Right cardiac atrium (tissue), 5 donors: ENCODE measurements at regions of chr12 and their contacts with region 1.

Region 1: GRCh38 chr12:71746983-71747611 is 7.6 kb upstream of the RAB21 start:
- DNase-seq: no peak
- ATAC-seq: peak; percentile 76 to 82
- H3K4me3 ChIP-seq: no peak overlapping the region
- H3K27ac ChIP-seq: no peak overlapping the region
- H3K4me1 ChIP-seq: no peaks in the 10 kb centered on the region
- H3K27me3 ChIP-seq: no peaks in the 10 kb centered on the region

Region 2: DNA sequence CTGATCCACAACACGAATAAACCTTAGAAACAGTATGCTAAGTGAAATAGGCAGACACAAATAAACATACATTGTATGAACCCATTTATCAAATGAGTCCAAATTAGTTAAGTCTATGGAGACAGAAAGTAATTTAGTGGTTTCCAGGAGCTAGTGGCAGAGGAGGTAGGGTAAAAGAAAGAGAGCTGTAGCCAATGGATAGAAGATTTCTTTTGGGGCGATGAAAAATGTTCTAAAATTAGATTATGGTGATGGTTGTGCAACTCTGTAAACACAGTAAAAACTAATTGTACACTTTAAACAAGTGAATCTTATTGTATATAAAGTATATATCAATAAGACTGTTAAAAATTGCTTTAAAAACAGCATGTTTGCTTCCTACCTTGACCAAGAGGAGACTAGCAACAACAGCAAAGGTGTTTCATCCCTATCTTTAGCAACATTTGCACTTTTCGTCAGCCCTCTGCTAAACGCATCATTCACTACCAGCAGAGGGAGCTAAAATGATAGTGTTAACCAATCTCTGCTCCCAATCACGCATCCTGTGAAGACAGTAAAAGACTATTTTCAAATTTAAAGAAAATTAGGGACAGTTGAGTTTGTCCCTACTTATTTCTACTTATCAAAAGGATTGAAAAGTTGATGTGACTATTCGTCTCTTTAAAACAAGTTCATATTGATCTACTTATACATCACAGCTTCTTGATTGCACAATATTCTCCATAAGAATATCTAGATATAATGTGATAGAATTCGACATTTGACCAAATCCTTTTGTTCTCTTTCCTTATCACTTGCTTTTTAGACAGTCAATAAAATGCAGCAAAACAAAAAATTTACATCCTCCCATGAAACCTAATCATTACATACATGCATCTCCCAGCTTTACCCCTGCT is 331.5 kb before region 1 on chr12:
- intact Hi-C with region 1: loop called (anchors 5 to 10 kb)
- DNase-seq: no peak
- ATAC-seq: peak; percentile 63 to 70
- H3K4me3 ChIP-seq: no peak overlapping the region
- H3K27ac ChIP-seq: no peak overlapping the region
- H3K4me1 ChIP-seq: no peaks in the 10 kb centered on the region
- H3K27me3 ChIP-seq: no peaks in the 10 kb centered on the region